ENCODE measurements at regions of chr14 and their contacts with region 1.

Region 1: GRCh38 chr14:49946320-49947141 is 53.6 kb downstream of the ARF6 start:
- DNase-seq: peak; percentile 77
- H3K4me3 Mint-ChIP-seq: peak overlapping the region; percentile 58
- H3K27ac Mint-ChIP-seq: peak overlapping the region; percentile 85
- H3K4me1 Mint-ChIP-seq: peaks cover 62% of the 10 kb centered on the region
- H3K27me3 Mint-ChIP-seq: no peaks in the 10 kb centered on the region

Region 2: GRCh38 chr14:49280566-49280965 is 666.0 kb before region 1 on chr14:
- intact Hi-C with region 1: no loop called
- DNase-seq: no peak
- H3K4me3 Mint-ChIP-seq: no peak overlapping the region
- H3K27ac Mint-ChIP-seq: no peak overlapping the region
- H3K4me1 Mint-ChIP-seq: no peaks in the 10 kb centered on the region
- H3K27me3 Mint-ChIP-seq: no peaks in the 10 kb centered on the region

Region 3: DNA sequence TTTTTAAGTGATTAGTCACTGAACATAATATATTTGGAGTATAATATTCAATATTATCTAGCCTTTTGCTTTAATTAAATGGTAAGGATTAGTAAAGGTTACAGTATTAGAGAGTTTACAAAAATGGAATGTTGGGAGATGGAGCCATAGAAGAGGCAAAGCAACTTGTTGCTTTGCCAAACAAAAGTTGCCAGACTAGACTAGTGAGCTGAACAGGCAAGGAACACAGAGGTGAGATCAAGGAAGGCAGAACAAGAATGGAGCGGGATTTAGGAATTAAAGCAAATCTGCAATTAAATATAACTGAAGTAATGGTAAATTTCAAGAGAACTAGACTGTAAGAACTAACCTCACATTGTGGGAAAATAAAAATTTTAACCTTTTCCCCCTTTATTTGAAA is 48.6 kb before region 1 on chr14:
- intact Hi-C with region 1: loop called (anchors 2 kb)
- DNase-seq: no peak
- H3K4me3 Mint-ChIP-seq: peak overlapping the region; percentile 96
- H3K27ac Mint-ChIP-seq: peak overlapping the region; percentile 98
- H3K4me1 Mint-ChIP-seq: peaks cover 28% of the 10 kb centered on the region
- H3K27me3 Mint-ChIP-seq: no peaks in the 10 kb centered on the region

Region 4: DNA sequence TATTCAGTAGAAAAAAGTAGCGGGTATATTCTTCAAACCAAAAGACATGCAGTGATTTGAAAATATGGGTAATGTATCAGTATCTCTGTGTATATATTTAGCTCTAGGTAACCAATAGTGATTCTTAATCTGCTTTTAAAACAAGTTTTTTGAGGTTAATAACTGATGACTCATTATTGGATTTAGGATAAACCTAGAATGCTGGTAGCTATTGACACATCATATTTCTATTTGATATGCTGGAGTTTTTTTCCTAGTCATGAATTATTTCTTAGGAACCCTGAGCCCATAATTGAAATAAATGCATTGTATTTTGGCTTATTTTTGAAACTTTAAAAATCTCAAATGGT is 38.1 kb before region 1 on chr14:
- intact Hi-C with region 1: loop called (anchors 2 kb)
- DNase-seq: no peak
- H3K4me3 Mint-ChIP-seq: peak overlapping the region; percentile 34
- H3K27ac Mint-ChIP-seq: peak overlapping the region; percentile 58
- H3K4me1 Mint-ChIP-seq: peaks cover 36% of the 10 kb centered on the region
- H3K27me3 Mint-ChIP-seq: no peaks in the 10 kb centered on the region

Region 5: DNA sequence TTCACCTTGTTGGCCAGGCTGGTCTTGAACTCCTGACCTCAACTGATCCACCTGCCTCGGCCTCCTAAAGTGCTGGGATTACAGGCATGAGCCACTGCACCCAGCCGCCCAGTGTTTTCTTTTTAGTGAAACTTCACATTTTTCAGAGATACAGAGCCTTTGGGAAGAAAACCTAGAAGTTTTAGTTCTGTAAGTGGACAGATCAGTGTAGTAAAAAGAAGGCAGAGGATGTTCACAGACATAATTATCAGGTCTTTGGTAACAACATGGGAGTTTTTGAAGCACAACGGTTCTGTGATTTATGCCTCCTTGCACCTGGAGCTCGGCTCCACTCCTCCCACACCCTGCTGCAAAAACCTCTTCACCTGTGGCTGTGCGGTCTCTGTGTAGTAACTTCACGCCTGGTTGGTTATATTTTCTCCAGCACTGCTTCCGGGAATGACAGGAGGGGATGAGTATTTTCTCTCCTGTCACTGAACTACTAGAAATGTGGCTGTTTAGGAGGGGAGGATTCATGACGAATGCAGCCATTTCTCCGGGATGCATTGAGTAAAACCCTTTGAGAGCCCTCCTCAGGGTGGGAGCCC is 13.4 kb after region 1 on chr14:
- intact Hi-C with region 1: loop called (anchors 1 kb)
- DNase-seq: peak; percentile 74
- H3K4me3 Mint-ChIP-seq: peak overlapping the region; percentile 39
- H3K27ac Mint-ChIP-seq: peak overlapping the region; percentile 18
- H3K4me1 Mint-ChIP-seq: peaks cover 39% of the 10 kb centered on the region
- H3K27me3 Mint-ChIP-seq: no peaks in the 10 kb centered on the region

Region 6: GRCh38 chr14:49971156-49972130 is 24.9 kb after region 1 on chr14:
- intact Hi-C with region 1: loop called (anchors 2 kb)
- DNase-seq: peak; percentile 88
- H3K4me3 Mint-ChIP-seq: peak overlapping the region; percentile 82
- H3K27ac Mint-ChIP-seq: peak overlapping the region; percentile 99
- H3K4me1 Mint-ChIP-seq: peaks cover 58% of the 10 kb centered on the region
- H3K27me3 Mint-ChIP-seq: no peaks in the 10 kb centered on the region

Region 7: GRCh38 chr14:49982501-49982951 is 36.0 kb after region 1 on chr14:
- intact Hi-C with region 1: loop called (anchors 5 kb)
- DNase-seq: no peak
- H3K4me3 Mint-ChIP-seq: no peak overlapping the region
- H3K27ac Mint-ChIP-seq: peak overlapping the region; percentile 78
- H3K4me1 Mint-ChIP-seq: peaks cover 59% of the 10 kb centered on the region
- H3K27me3 Mint-ChIP-seq: no peaks in the 10 kb centered on the region